ENCODE measurements at regions of chr3 and their contacts with region 1.

Region 1: GRCh38 chr3:183895296-183895695 is 10.6 kb upstream of the PARL start:
- DNase-seq: peak; percentile 86
- CTCF ChIP-seq: peak; percentile 82

Region 2: GRCh38 chr3:184289426-184289938 is 394.2 kb after region 1 on chr3:
- in situ Hi-C with region 1: loop called (anchors 10 kb)
- DNase-seq: peak; percentile 82
- CTCF ChIP-seq: peak; percentile 39

Measured in GM13976 (cell line).